ENCODE measurements at regions of chr17 and their contacts with region 1.

Region 1: DNA sequence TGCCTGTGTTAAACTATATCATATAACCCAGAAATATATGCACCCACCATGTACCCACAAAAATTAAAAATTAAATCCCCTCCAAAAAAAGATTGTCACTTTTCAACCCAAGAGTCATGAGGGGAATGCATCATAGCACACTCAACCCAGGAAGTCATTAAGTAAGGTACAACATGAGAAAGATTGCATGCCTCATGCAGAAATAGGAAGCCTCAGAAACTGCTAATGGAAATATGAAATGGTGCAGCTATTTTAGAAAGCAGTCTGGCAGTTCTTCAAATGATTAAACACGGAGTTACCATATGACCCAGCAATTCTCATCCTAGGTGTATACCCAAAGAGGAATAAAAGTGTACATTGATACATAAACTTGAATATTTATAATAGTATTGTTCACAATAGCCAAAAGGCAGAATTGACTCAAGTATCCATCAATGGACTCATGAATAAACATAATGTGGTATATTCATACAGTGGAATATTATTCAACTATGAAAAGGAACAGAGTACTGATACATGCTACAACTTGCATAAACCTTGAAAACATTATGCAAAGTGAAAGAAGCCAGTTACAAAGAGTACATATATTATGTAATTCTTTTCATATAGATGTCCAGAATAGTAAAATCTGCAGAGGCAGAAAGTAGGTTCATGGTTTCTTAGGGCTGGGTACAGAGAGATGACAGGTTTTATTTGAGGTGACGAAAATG is 70.4 kb downstream of the TMEM100 start:
- DNase-seq: no peak
- ATAC-seq: no peak
- H3K4me3 Mint-ChIP-seq: no peak overlapping the region
- H3K27ac Mint-ChIP-seq: no peak overlapping the region
- H3K4me1 Mint-ChIP-seq: no peaks in the 10 kb centered on the region
- H3K27me3 Mint-ChIP-seq: peaks cover 30% of the 10 kb centered on the region

Region 2: GRCh38 chr17:55161935-55162555 is 490.2 kb before region 1 on chr17:
- CTCF ChIA-PET with region 1: no interaction called
- POLR2A ChIA-PET with region 1: no interaction called
- intact Hi-C with region 1: no loop called
- DNase-seq: no peak
- ATAC-seq: no peak
- H3K4me3 Mint-ChIP-seq: no peak overlapping the region
- H3K27ac Mint-ChIP-seq: no peak overlapping the region
- H3K4me1 Mint-ChIP-seq: no peaks in the 10 kb centered on the region
- H3K27me3 Mint-ChIP-seq: no peaks in the 10 kb centered on the region

Region 3: GRCh38 chr17:55368706-55369105 is 283.6 kb before region 1 on chr17:
- CTCF ChIA-PET with region 1: no interaction called
- POLR2A ChIA-PET with region 1: no interaction called
- intact Hi-C with region 1: no loop called
- DNase-seq: no peak
- ATAC-seq: no peak
- H3K4me3 Mint-ChIP-seq: no peak overlapping the region
- H3K27ac Mint-ChIP-seq: no peak overlapping the region
- H3K4me1 Mint-ChIP-seq: peaks cover 3% of the 10 kb centered on the region
- H3K27me3 Mint-ChIP-seq: peaks cover 9% of the 10 kb centered on the region

Region 4: GRCh38 chr17:55641676-55642081 is 10.6 kb before region 1 on chr17:
- CTCF ChIA-PET with region 1: no interaction called
- POLR2A ChIA-PET with region 1: no interaction called
- intact Hi-C with region 1: no loop called
- DNase-seq: peak; percentile 72
- ATAC-seq: peak; percentile 65
- H3K4me3 Mint-ChIP-seq: no peak overlapping the region
- H3K27ac Mint-ChIP-seq: no peak overlapping the region
- H3K4me1 Mint-ChIP-seq: no peaks in the 10 kb centered on the region
- H3K27me3 Mint-ChIP-seq: peaks cover 10% of the 10 kb centered on the region

Region 5: DNA sequence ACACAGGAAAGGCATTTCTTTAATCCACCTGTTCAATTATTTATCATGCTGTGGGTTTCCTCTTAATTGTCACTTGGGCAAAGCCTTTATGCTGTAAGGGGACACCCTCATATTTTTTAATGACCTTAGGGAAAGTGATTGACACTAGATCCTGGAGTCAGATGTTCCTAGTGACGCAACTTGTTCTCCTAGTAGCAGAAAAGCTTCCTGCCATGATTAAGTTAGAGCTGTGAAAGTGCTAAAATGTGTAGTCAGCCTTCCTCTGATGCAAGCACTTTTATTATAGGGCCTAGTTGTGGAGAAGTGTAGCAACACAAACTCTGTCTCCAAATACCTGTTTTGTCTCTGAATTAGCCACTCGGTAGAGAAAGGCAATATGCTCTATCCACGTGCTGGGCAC is 58.1 kb after region 1 on chr17:
- CTCF ChIA-PET with region 1: interaction called, 3 read pairs
- POLR2A ChIA-PET with region 1: no interaction called
- intact Hi-C with region 1: loop called in 1 of 2 experiments (anchors 5 kb)
- DNase-seq: no peak
- ATAC-seq: no peak
- H3K4me3 Mint-ChIP-seq: no peak overlapping the region
- H3K27ac Mint-ChIP-seq: no peak overlapping the region
- H3K4me1 Mint-ChIP-seq: no peaks in the 10 kb centered on the region
- H3K27me3 Mint-ChIP-seq: peaks cover 24% of the 10 kb centered on the region

Region 6: DNA sequence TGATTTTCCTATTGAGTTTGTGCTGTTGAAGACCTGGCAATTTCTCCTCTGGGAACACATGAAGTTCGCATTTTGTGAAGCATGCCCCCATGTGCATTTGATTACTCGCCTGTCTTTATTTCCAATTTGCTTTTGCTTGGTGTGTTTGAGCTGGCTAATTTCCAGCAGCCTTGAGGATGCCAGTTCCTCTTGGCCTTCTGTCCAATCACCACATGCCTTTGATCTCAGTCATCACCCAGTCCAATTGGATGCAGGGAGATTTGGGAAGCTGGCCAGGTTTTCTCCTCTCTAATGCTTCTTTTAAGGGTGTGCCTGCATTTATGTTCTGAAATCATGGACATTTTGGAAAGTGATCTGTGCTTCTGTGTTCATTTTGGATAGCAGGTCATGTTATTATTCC is 74.2 kb after region 1 on chr17:
- CTCF ChIA-PET with region 1: no interaction called
- POLR2A ChIA-PET with region 1: no interaction called
- intact Hi-C with region 1: no loop called
- DNase-seq: no peak
- ATAC-seq: no peak
- H3K4me3 Mint-ChIP-seq: no peak overlapping the region
- H3K27ac Mint-ChIP-seq: no peak overlapping the region
- H3K4me1 Mint-ChIP-seq: no peaks in the 10 kb centered on the region
- H3K27me3 Mint-ChIP-seq: peaks cover 51% of the 10 kb centered on the region

Region 7: DNA sequence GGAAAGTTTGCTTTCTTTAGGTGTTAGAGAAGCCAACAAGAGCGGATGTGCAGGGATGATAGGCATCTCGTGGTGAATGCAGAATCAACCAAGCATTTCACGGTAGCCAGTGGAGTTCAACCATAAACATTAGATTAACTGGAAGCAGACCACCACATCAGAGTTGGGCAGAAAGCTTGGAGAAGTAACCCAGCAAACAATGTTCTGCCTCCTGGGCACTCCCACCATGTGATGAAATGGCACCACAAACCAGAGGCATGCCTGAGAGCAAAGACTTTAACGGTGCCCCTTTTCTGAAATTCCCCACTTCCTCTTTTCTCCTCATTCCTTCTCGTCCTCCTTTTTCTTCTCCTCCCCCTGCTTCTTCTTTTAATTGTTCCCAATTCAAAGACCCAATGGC is 307.5 kb after region 1 on chr17:
- CTCF ChIA-PET with region 1: no interaction called
- POLR2A ChIA-PET with region 1: no interaction called
- intact Hi-C with region 1: loop called in 1 of 2 experiments (anchors 10 kb)
- DNase-seq: no peak
- ATAC-seq: no peak
- H3K4me3 Mint-ChIP-seq: no peak overlapping the region
- H3K27ac Mint-ChIP-seq: no peak overlapping the region
- H3K4me1 Mint-ChIP-seq: no peaks in the 10 kb centered on the region
- H3K27me3 Mint-ChIP-seq: peaks cover 4% of the 10 kb centered on the region